Activated B cell treated with CpG ODN at 0.5 μM for 24 hours (primary cell): ENCODE measurements at regions of chr6 and their contacts with region 1.

Region 1: DNA sequence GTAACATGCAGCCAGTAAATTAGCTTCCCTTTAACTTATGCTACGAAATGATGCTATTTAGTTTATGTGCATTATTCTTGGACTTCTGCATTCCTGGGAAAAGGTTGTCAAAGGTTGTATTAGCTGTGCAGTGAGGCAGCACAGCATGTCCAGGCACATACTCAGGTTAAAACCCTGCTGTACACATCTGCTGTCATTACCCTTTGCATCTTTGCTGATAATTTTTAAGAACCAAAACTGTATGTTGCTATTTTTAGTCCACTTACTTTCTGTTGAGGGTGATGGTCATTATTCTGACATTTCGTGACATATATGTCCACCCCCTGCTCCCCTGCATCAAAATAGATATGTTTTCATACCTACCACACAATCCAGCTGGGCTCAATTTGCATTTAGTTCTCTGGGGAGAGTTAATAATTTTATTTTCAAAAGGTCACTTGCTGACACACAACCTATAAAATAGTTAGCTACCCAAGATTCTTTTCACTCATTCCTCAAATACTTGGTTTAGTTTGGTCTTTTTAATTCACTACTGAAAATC is 142.5 kb upstream of the SPACA1 start:
- DNase-seq: no peak
- ATAC-seq: peak; percentile 49
- H3K4me3 Mint-ChIP-seq: no peak overlapping the region
- H3K27ac Mint-ChIP-seq: no peak overlapping the region
- H3K4me1 Mint-ChIP-seq: peaks cover 15% of the 10 kb centered on the region
- H3K27me3 Mint-ChIP-seq: no peaks in the 10 kb centered on the region
- CTCF ChIP-seq: no peak

Region 2: GRCh38 chr6:87922947-87923330 is 17.8 kb after region 1 on chr6:
- CTCF ChIA-PET with region 1: no interaction called
- POLR2A ChIA-PET with region 1: interaction called, 12 read pairs
- intact Hi-C with region 1: loop called (anchors 1 kb)
- DNase-seq: peak; percentile 39
- ATAC-seq: peak; percentile 81
- H3K4me3 Mint-ChIP-seq: peak overlapping the region; percentile 33
- H3K27ac Mint-ChIP-seq: peak overlapping the region; percentile 88
- H3K4me1 Mint-ChIP-seq: peaks cover 87% of the 10 kb centered on the region
- H3K27me3 Mint-ChIP-seq: no peaks in the 10 kb centered on the region
- CTCF ChIP-seq: no peak

Region 3: GRCh38 chr6:87951751-87952150 is 46.6 kb after region 1 on chr6:
- CTCF ChIA-PET with region 1: no interaction called
- POLR2A ChIA-PET with region 1: no interaction called
- intact Hi-C with region 1: no loop called
- DNase-seq: no peak
- ATAC-seq: no peak
- H3K4me3 Mint-ChIP-seq: no peak overlapping the region
- H3K27ac Mint-ChIP-seq: no peak overlapping the region
- H3K4me1 Mint-ChIP-seq: no peaks in the 10 kb centered on the region
- H3K27me3 Mint-ChIP-seq: peaks cover 3% of the 10 kb centered on the region
- CTCF ChIP-seq: no peak

Region 4: GRCh38 chr6:87968435-87969278 is 63.5 kb after region 1 on chr6:
- CTCF ChIA-PET with region 1: no interaction called
- POLR2A ChIA-PET with region 1: no interaction called
- intact Hi-C with region 1: no loop called
- DNase-seq: no peak
- ATAC-seq: peak; percentile 47
- H3K4me3 Mint-ChIP-seq: no peak overlapping the region
- H3K27ac Mint-ChIP-seq: no peak overlapping the region
- H3K4me1 Mint-ChIP-seq: no peaks in the 10 kb centered on the region
- H3K27me3 Mint-ChIP-seq: no peaks in the 10 kb centered on the region
- CTCF ChIP-seq: no peak